KBM-7 (cell line): ENCODE measurements at regions of chr1 and their contacts with region 1.

Region 1: DNA sequence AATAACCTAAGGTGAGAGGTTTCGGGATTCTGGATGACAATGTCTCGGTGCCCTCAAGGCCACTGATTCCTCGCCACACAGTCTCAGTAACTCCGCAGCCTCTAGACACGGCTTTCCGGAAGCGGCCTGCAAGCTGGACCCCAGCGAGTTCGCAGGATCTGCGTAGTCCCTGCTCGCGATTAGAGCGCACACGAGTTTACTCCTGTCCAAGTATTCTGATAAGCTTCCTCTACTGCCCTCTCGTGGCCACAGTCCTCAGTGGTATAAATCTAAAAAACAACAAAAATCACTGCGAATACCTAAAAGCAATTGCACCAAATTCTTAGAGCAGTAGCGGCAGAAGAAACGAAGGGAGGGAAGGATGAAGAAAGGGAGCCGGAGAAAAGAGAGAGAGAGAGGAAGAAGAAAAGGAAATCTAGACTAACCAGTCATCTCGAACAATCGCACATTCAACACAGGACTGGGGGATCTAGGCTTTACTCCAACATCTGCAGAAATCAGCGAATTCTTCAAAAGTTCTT is 1.1 kb upstream of the PLXNA2 start:
- DNase-seq: peak; percentile 90

Region 2: DNA sequence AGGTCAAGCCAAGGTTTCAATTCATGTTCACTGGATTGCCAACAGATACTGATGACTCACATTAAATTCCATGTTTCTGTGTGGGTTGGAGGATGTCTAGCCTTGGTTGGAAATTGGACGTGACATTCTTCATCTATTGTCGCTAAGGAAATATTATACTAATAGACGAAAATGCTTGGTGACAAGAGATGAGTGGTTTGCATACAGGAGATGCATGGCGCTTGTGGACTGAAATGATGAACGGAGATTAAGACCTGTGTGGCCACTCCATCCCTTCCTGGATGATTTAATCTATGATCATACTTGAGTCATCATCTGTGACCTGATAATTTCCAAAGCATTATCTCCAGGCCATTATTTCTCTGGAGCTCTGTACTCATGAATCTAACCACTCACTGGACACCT is 237.3 kb before region 1 on chr1:
- in situ Hi-C with region 1: no loop called
- DNase-seq: no peak

Region 3: GRCh38 chr1:208036109-208036808 is 209.0 kb before region 1 on chr1:
- in situ Hi-C with region 1: loop called (anchors 25 kb)
- DNase-seq: no peak

Region 4: DNA sequence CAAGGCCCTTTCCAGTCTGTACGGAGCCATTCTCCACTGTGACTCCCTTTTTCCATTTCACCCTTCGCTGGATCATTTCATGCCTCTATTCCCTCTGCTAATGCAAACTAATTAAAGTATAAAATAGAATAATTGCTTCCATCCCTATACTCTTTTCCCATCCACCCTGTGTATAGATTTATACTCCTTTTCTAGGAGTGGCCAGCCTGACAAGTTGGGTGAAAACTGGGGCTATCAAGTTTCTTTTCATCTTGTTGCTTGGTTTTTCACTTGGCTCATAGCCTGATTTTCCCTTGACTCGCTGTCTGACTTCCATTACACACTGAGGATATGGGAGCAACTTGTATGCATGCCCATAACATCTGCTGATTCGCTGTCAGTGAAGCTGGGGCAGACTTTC is 108.1 kb before region 1 on chr1:
- in situ Hi-C with region 1: no loop called
- DNase-seq: no peak

Region 5: GRCh38 chr1:208189183-208189582 is 56.1 kb before region 1 on chr1:
- in situ Hi-C with region 1: no loop called
- DNase-seq: peak; percentile 69

Region 6: GRCh38 chr1:208909011-208909984 is 664.1 kb after region 1 on chr1:
- in situ Hi-C with region 1: no loop called
- DNase-seq: no peak